Naive thymus-derived CD4-positive, alpha-beta T cell (primary cell): ENCODE measurements at regions of chr13 and their contacts with region 1.

Region 1: DNA sequence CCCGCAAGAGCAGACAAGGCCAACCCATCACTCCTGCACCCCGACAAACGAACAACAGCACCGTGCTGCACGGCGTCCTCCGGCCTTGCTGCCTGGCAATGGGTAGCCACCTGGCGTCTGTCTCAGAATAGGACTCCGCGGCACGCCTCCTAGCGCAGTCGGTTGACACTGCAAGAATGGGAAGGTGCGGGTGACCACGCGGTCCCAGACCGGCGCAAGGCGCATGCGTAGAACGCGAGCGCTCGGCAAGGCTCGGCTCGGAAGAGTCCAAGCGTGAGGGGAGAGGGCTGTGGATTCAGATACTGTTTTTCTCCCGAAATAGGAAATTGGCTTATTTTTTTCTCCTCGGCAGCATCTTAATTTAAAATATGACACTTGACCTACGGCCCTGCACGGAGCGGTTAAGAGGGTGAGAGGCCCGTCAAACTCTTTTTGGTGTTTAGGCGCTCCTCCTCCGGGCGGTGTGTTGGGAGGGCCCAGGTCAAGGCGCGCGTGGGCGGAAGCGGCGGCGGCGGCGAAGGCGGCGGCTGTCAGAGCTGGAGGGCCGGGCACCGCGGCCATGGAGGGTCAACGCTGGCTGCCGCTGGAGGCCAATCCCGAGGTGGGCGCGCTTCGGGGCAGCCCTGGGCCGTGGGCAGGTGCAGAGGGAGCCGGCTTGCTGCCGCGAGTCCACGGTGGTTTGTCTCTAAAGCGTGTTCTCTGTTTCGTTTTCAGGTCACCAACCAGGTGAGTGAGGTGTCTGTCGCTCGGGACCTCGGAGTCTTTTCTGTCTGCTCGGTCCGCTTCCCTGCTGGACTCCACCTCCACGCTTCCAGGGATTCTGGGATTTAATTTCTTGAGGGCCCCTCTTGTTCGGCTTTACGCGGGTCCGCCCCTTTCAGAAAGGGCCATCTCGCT is at the start of gene UCHL3:
- DNase-seq: peak; percentile 94 to 99 (median 97)
- ATAC-seq: peak; percentile 97
- H3K4me3 ChIP-seq: peak within 1 kb of the TSS; percentile 95
- H3K4me3 Mint-ChIP-seq: peak within 1 kb of the TSS; percentile 91 to 99 (median 96)
- H3K27ac ChIP-seq: peak within 1 kb of the TSS; percentile 84
- H3K27ac Mint-ChIP-seq: peak within 1 kb of the TSS; percentile 94 to 99 (median 98)
- H3K4me1 ChIP-seq: peaks cover 15% of the 10 kb centered on the region in 2 donors
- H3K4me1 Mint-ChIP-seq: peaks cover 27 to 53% (median 46%) of the 10 kb centered on the region in 7 donors
- H3K27me3 ChIP-seq: no peaks in the 10 kb centered on the region
- H3K27me3 Mint-ChIP-seq: peaks cover 0 to 2% (median 0%) of the 10 kb centered on the region in 5 donors
- total RNA-seq, gene UCHL3: 18.6 to 35.8 (median 20.6) TPM

Region 2: DNA sequence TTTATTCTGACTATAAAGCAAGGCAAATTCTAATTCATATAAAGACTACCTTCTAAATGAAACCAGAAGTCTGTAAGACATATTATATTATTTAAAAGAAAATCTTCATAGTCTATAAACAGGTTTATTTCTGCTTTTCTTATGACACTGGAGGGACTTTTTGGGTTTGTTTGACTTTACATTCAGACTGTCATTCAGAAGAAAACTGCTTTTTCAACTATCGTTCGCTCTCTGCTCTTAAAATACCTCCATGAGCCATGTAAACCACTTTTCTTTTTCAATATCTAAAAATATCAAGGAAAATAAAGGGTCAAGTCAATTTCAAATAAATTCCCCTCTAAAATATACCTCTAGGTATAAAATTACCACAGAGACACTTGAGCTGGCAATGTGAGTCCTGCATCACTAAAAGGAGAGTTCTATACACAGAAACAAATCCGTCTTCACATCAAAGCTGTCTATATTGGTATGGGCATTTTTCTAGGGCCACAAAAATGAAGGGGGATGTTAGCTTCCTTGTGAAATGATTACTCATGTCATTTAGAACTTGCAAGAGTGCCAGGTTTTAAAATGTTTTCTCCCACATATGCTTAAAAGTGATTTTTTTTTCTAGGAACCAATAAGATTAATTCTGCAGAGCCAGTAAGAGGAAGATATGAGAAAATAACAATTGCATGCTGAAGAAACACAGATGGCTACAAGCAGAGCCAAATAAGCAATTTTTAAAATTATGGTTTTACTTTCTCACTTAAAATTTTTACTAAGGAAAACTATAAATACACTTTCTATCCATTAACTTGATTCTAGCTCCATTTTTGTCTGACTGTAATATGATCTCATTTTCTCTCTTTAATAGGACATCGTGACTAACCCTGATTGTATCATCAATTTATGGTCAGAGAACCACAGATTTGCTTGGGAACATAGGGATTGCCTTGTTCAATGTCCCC is 249.3 kb before region 1 on chr13:
- CTCF ChIA-PET with region 1: no interaction called
- POLR2A ChIA-PET with region 1: no interaction called
- intact Hi-C with region 1: no loop called
- DNase-seq: no peak
- ATAC-seq: peak; percentile 72
- H3K4me3 ChIP-seq: no peak overlapping the region
- H3K4me3 Mint-ChIP-seq: peak overlapping the region in 4 of 10 donors; percentile 12 to 51 (median 22)
- H3K27ac ChIP-seq: no peak overlapping the region
- H3K27ac Mint-ChIP-seq: peak overlapping the region in 8 of 9 donors; percentile 20 to 79 (median 60)
- H3K4me1 ChIP-seq: peaks cover 0 to 25% of the 10 kb centered on the region in 2 donors
- H3K4me1 Mint-ChIP-seq: peaks cover 14 to 56% (median 44%) of the 10 kb centered on the region in 7 donors
- H3K27me3 ChIP-seq: no peaks in the 10 kb centered on the region
- H3K27me3 Mint-ChIP-seq: no peaks in the 10 kb centered on the region

Region 3: GRCh38 chr13:75372517-75372916 is 177.0 kb before region 1 on chr13:
- CTCF ChIA-PET with region 1: interaction called, 3 read pairs
- POLR2A ChIA-PET with region 1: no interaction called
- intact Hi-C with region 1: loop called (anchors 1 kb)
- DNase-seq: peak in 7 of 9 donors; percentile 15 to 51 (median 38)
- ATAC-seq: peak; percentile 86
- H3K4me3 ChIP-seq: no peak overlapping the region
- H3K4me3 Mint-ChIP-seq: no peak overlapping the region
- H3K27ac ChIP-seq: no peak overlapping the region
- H3K27ac Mint-ChIP-seq: no peak overlapping the region
- H3K4me1 ChIP-seq: no peaks in the 10 kb centered on the region
- H3K4me1 Mint-ChIP-seq: peaks cover 0 to 2% (median 0%) of the 10 kb centered on the region in 7 donors
- H3K27me3 ChIP-seq: no peaks in the 10 kb centered on the region
- H3K27me3 Mint-ChIP-seq: peaks cover 0 to 8% (median 0%) of the 10 kb centered on the region in 5 donors

Region 4: DNA sequence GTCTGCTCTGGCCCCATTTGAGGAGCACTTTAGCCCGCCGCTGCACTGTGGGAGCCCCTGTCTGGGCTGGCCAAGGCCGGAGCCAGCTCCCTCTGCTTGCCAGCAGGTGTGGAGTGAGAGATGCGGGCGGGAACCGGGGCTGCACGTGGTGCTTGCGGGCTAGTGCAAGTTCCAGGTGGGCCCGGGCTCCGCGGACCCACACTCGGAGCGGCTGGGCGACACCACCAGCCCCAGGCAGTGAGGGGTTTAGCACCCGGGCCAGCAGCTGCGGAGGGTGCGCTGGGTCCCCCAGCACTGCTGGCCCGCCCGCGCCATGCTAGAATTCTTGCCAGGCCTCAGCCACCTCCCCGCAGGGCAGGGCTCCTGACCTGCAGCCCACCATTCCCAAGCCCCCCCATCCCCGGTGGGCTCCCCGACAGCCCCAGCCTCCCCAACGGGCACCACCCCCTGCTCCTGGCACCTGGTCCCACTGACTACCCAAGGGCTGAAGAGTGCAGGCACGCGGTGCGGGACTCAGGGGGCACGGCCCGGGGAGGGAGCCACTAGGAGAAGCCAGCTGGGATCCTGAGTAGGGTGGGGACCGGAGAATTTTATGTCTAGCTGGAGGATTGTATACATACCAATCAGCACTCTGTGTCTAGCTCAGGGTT is 30.9 kb before region 1 on chr13:
- CTCF ChIA-PET with region 1: no interaction called
- POLR2A ChIA-PET with region 1: no interaction called
- intact Hi-C with region 1: no loop called
- DNase-seq: no peak
- ATAC-seq: no peak
- H3K4me3 ChIP-seq: no peak overlapping the region
- H3K4me3 Mint-ChIP-seq: no peak overlapping the region
- H3K27ac ChIP-seq: no peak overlapping the region
- H3K27ac Mint-ChIP-seq: no peak overlapping the region
- H3K4me1 ChIP-seq: no peaks in the 10 kb centered on the region
- H3K4me1 Mint-ChIP-seq: no peaks in the 10 kb centered on the region
- H3K27me3 ChIP-seq: no peaks in the 10 kb centered on the region
- H3K27me3 Mint-ChIP-seq: peaks cover 0 to 6% (median under 1%) of the 10 kb centered on the region in 5 donors

Region 5: DNA sequence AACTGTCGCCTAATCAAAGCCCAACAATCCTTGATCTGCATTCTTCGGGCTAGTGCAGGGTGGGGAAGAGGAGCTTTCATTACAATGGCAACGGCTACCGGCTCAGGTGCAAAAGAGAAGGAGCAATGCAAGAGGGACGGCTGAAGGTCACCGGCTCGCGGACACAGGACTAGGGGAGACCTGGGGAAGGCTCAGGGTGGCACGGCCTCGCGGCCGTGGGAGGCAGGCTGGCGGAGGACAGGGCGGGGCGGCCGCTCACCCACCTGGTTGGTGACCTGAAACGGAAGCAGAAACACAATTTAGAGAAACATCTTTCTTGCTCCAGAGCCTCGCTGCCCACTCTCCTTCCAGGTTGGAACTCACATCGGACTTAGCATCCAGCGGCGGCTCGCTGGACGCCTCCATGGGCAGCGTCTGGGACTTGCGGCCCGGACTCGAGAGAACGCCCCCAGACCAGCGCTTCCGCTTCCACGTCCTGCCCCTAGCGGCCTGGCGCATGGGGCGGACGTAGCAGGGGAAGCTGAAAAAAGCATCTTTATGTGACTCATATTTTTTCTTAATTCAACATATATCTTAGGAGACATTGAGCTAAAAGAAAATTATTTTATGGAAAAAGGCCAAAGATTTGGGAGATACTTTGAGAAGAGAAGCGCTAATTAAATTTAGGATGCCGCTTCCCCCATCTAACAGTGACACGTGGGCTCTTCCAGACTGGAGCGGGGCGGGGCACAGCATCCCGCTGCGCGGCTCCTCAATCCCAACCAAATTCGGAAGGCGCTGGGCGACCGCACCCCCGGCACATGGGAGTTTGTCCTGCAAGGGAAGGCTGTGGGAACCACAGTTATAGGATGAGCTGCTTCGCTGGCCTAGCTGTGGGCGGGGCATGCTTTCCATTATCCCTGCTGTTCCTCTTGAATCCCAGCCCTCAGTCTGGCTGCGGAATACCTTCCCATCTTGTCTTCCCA is 11.8 kb before region 1 on chr13 and contains the start of gene COMMD6:
- CTCF ChIA-PET with region 1: interaction called, 3 read pairs
- POLR2A ChIA-PET with region 1: interaction called, 6 read pairs
- intact Hi-C with region 1: loop called (anchors 1 kb)
- DNase-seq: peak; percentile 46 to 77 (median 65)
- ATAC-seq: peak; percentile 93
- H3K4me3 ChIP-seq: peak within 1 kb of the TSS; percentile 96
- H3K4me3 Mint-ChIP-seq: peak within 1 kb of the TSS; percentile 88 to 100 (median 98)
- H3K27ac ChIP-seq: peak within 1 kb of the TSS; percentile 85
- H3K27ac Mint-ChIP-seq: peak within 1 kb of the TSS; percentile 83 to 98 (median 95)
- H3K4me1 ChIP-seq: peaks cover 12 to 26% of the 10 kb centered on the region in 2 donors
- H3K4me1 Mint-ChIP-seq: peaks cover 28 to 57% (median 45%) of the 10 kb centered on the region in 7 donors
- H3K27me3 ChIP-seq: no peaks in the 10 kb centered on the region
- H3K27me3 Mint-ChIP-seq: no peaks in the 10 kb centered on the region
- total RNA-seq, gene COMMD6: 133 to 241 (median 205) TPM

Region 6: GRCh38 chr13:75736173-75736572 is 186.7 kb after region 1 on chr13:
- CTCF ChIA-PET with region 1: no interaction called
- POLR2A ChIA-PET with region 1: no interaction called
- intact Hi-C with region 1: no loop called
- DNase-seq: no peak
- ATAC-seq: no peak
- H3K4me3 ChIP-seq: no peak overlapping the region
- H3K4me3 Mint-ChIP-seq: no peak overlapping the region
- H3K27ac ChIP-seq: no peak overlapping the region
- H3K27ac Mint-ChIP-seq: no peak overlapping the region
- H3K4me1 ChIP-seq: no peaks in the 10 kb centered on the region
- H3K4me1 Mint-ChIP-seq: peaks cover 0 to 8% (median 0%) of the 10 kb centered on the region in 7 donors
- H3K27me3 ChIP-seq: no peaks in the 10 kb centered on the region
- H3K27me3 Mint-ChIP-seq: no peaks in the 10 kb centered on the region

Region 7: GRCh38 chr13:76991796-76992547 is 1442.5 kb after region 1 on chr13 and contains the start of gene CLN5:
- CTCF ChIA-PET with region 1: no interaction called
- POLR2A ChIA-PET with region 1: no interaction called
- intact Hi-C with region 1: loop called (anchors 1 to 2 kb)
- DNase-seq: peak; percentile 93 to 98 (median 96)
- ATAC-seq: peak; percentile 92
- H3K4me3 ChIP-seq: peak within 1 kb of the TSS; percentile 87
- H3K4me3 Mint-ChIP-seq: peak within 1 kb of the TSS; percentile 88 to 99 (median 96)
- H3K27ac ChIP-seq: peak within 1 kb of the TSS; percentile 96
- H3K27ac Mint-ChIP-seq: peak within 1 kb of the TSS; percentile 96 to 99 (median 99)
- H3K4me1 ChIP-seq: peaks cover 12 to 19% of the 10 kb centered on the region in 2 donors
- H3K4me1 Mint-ChIP-seq: peaks cover 27 to 59% (median 53%) of the 10 kb centered on the region in 7 donors
- H3K27me3 ChIP-seq: peaks cover 0 to 3% of the 10 kb centered on the region in 2 donors
- H3K27me3 Mint-ChIP-seq: peaks cover 0 to 12% (median 0%) of the 10 kb centered on the region in 5 donors
- total RNA-seq, gene CLN5: 18.9 to 45.3 (median 27.7) TPM